ENCODE measurements at regions of chr6 and their contacts with region 1.

Region 1: DNA sequence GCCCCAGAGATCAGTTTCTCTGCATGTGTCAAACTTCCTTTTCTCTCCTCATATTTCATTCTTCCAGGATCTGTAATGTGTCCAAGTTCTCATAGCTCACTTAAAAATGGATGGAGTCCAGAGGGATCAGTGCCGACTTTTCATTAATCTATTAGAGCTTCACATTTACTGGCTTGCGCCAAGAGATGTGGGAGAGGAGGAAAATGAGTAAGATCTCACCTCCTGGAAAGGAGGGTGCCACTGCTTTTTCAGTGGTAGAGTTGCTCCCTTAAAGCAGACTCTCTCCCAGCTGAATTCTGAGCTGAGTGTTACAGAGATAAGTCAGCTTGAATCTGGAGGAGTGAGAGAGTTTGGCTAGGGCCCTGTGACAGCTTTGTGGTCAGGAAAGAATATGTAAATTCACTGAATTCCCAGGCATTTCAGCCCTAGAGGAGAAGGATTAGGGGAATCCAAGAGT is 175.9 kb downstream of the SOX4 start:
- DNase-seq: peak; percentile 95
- H3K4me3 ChIP-seq: no peak overlapping the region
- H3K27ac ChIP-seq: peak overlapping the region; percentile 48
- H3K27me3 ChIP-seq: no peaks in the 10 kb centered on the region
- CTCF ChIP-seq: no peak

Region 2: DNA sequence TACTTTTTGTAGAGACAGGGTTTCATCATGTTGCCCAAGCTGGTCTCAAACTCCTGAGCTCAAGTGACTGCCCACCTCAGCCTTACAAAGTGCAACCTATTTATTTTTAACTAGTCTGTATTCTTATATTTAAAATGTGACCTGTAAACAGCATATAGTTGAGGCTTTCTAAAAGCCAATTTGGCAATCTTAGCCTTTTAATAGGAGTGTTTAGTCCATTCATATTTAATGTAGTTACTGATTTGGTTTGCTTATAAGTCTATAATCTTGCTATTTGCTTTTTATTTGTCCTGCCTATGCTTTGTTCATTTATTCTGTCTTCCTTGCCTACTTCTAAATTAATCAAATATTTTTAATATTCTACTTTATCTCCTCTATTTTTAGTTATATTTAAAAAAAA is 190.9 kb before region 1 on chr6:
- CTCF ChIA-PET with region 1: no interaction called
- POLR2A ChIA-PET with region 1: no interaction called
- DNase-seq: no peak
- H3K4me3 ChIP-seq: no peak overlapping the region
- H3K27ac ChIP-seq: no peak overlapping the region
- H3K27me3 ChIP-seq: no peaks in the 10 kb centered on the region
- CTCF ChIP-seq: no peak

Region 3: GRCh38 chr6:21753241-21754108 is 16.0 kb before region 1 on chr6:
- CTCF ChIA-PET with region 1: interaction called, 5 read pairs
- POLR2A ChIA-PET with region 1: interaction called, 14 read pairs
- DNase-seq: peak; percentile 82
- H3K4me3 ChIP-seq: no peak overlapping the region; the same call in 1 of the 2 replicates
- H3K27ac ChIP-seq: peak overlapping the region; percentile 69
- H3K27me3 ChIP-seq: no peaks in the 10 kb centered on the region
- CTCF ChIP-seq: no peak

Measured in AG04450 (cell line).